CD4-positive, alpha-beta memory T cell (primary cell): ENCODE measurements at regions of chr5 and their contacts with region 1.

Region 1: GRCh38 chr5:98773464-98774191 is at the start of gene RGMB:
- DNase-seq: peak; percentile 87 to 95 (median 89)
- H3K4me3 ChIP-seq: peak within 1 kb of the TSS; percentile 71 to 73
- H3K4me3 Mint-ChIP-seq: peak within 1 kb of the TSS; percentile 94 to 99 (median 98)
- H3K27ac ChIP-seq: peak within 1 kb of the TSS; percentile 59
- H3K27ac Mint-ChIP-seq: peak within 1 kb of the TSS; percentile 89 to 98 (median 94)
- H3K4me1 ChIP-seq: peaks cover 48% of the 10 kb centered on the region
- H3K4me1 Mint-ChIP-seq: peaks cover 34 to 70% (median 50%) of the 10 kb centered on the region in 4 donors
- H3K27me3 ChIP-seq: peaks cover 5% of the 10 kb centered on the region
- H3K27me3 Mint-ChIP-seq: peaks cover 2 to 3% of the 10 kb centered on the region in 2 donors
- total RNA-seq, gene RGMB: 16.5 to 17.0 TPM

Region 2: DNA sequence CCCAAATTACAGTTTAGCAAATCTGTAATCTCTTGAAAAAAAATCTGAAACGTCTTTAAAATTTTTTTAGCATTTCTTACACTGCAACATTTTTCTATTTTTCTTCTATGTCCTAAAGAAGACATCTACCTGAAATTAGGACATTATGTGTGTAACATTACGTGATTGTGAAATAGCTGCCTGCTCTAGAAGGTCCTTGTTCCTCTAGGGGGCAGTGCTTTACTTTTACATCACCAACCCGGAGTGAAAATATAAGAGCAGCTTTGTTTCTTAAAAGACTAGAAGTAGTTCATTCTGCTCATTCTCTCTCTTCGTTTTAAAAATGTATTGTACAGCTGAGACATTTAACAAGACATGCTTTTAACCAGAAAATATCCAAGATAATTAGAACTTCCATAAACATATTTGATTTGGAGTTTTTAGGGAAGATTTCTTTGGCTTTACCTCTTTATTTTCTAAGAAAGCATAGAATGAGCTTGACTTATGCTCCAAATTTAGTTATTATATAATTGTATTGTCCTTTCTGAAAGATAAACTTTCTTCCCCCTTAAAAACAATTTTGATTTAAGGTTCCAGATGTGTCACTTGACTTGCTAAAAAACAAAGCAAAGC is 1542.5 kb before region 1 on chr5:
- CTCF ChIA-PET with region 1: interaction called, 35 read pairs
- POLR2A ChIA-PET with region 1: no interaction called
- intact Hi-C with region 1: loop called (anchors 2 kb)
- DNase-seq: peak in 4 of 5 donors; percentile 31 to 44 (median 37)
- H3K4me3 ChIP-seq: no peak overlapping the region
- H3K4me3 Mint-ChIP-seq: no peak overlapping the region
- H3K27ac ChIP-seq: no peak overlapping the region
- H3K27ac Mint-ChIP-seq: no peak overlapping the region
- H3K4me1 ChIP-seq: no peaks in the 10 kb centered on the region
- H3K4me1 Mint-ChIP-seq: no peaks in the 10 kb centered on the region
- H3K27me3 ChIP-seq: no peaks in the 10 kb centered on the region
- H3K27me3 Mint-ChIP-seq: peaks cover 4 to 6% of the 10 kb centered on the region in 2 donors

Region 3: DNA sequence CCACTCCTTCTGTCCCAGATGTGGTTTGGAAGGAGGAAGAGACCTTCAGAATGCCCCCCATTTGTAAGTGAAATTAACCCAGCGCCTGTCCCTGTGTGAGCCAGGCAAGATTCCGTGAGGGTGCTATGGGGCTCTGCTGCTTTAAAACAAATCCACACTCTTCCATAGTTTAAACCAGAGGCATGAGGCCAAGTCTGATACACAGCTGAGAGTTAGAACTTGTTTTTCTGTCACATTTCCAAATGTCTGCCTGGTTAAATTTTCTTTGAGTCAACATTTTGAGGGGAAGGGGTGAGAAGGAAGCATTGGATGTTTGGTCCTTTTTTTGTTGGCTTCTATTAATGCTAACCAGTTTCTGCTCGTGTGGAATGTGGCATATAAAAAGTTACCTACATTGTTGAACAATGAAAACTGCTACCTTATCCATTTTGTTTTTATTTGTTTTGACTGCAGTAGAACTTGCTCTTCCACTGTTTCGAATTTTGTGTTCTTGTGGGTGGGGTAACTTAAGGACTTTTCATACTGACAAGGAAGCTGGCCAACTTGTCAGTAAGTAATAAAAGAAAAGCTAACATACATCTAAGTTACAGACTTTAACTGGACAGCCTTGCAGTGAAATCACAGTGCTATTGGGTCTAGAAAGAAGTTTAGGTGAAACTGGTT is 12.7 kb after region 1 on chr5:
- CTCF ChIA-PET with region 1: interaction called, 51 read pairs
- POLR2A ChIA-PET with region 1: interaction called, 4 read pairs
- intact Hi-C with region 1: no loop called
- DNase-seq: no peak
- H3K4me3 ChIP-seq: no peak overlapping the region
- H3K4me3 Mint-ChIP-seq: no peak overlapping the region
- H3K27ac ChIP-seq: no peak overlapping the region
- H3K27ac Mint-ChIP-seq: peak overlapping the region in 1 of 7 donors; percentile 71
- H3K4me1 ChIP-seq: no peaks in the 10 kb centered on the region
- H3K4me1 Mint-ChIP-seq: peaks cover 4 to 53% (median 21%) of the 10 kb centered on the region in 4 donors
- H3K27me3 ChIP-seq: no peaks in the 10 kb centered on the region
- H3K27me3 Mint-ChIP-seq: peaks cover 0 to 1% of the 10 kb centered on the region in 2 donors

Region 4: GRCh38 chr5:99032234-99033013 is 258.8 kb after region 1 on chr5:
- CTCF ChIA-PET with region 1: interaction called, 4 read pairs
- POLR2A ChIA-PET with region 1: no interaction called
- intact Hi-C with region 1: loop called (anchors 2 kb)
- DNase-seq: peak in 3 of 5 donors; percentile 18 to 21 (median 19)
- H3K4me3 ChIP-seq: peak overlapping the region in 1 of 2 donors; percentile 33
- H3K4me3 Mint-ChIP-seq: peak overlapping the region; percentile 82 to 92 (median 88)
- H3K27ac ChIP-seq: peak overlapping the region; percentile 71
- H3K27ac Mint-ChIP-seq: peak overlapping the region; percentile 90 to 99 (median 98)
- H3K4me1 ChIP-seq: peaks cover 69% of the 10 kb centered on the region
- H3K4me1 Mint-ChIP-seq: peaks cover 58 to 89% (median 71%) of the 10 kb centered on the region in 4 donors
- H3K27me3 ChIP-seq: no peaks in the 10 kb centered on the region
- H3K27me3 Mint-ChIP-seq: no peaks in the 10 kb centered on the region